CD8-positive, alpha-beta memory T cell (primary cell): ENCODE measurements at regions of chr11 and their contacts with region 1.

Region 1: GRCh38 chr11:116787786-116788486 is at the start of gene ZPR1:
- DNase-seq: peak; percentile 82 to 91 (median 85)
- H3K4me3 ChIP-seq: peak within 1 kb of the TSS; percentile 93
- H3K4me3 Mint-ChIP-seq: peak within 1 kb of the TSS; percentile 93 to 100 (median 97)
- H3K27ac ChIP-seq: peak within 1 kb of the TSS; percentile 96
- H3K27ac Mint-ChIP-seq: peak within 1 kb of the TSS; percentile 88 to 99 (median 98)
- H3K4me1 ChIP-seq: peaks cover 29% of the 10 kb centered on the region
- H3K4me1 Mint-ChIP-seq: peaks cover 46 to 69% (median 57%) of the 10 kb centered on the region in 3 donors
- H3K27me3 ChIP-seq: no peaks in the 10 kb centered on the region
- H3K27me3 Mint-ChIP-seq: no peaks in the 10 kb centered on the region
- total RNA-seq, gene ZPR1: 118 to 124 TPM

Region 2: GRCh38 chr11:116637766-116638165 is 150.2 kb before region 1 on chr11:
- CTCF ChIA-PET with region 1: no interaction called
- POLR2A ChIA-PET with region 1: no interaction called
- DNase-seq: no peak
- H3K4me3 ChIP-seq: no peak overlapping the region
- H3K4me3 Mint-ChIP-seq: no peak overlapping the region
- H3K27ac ChIP-seq: no peak overlapping the region
- H3K27ac Mint-ChIP-seq: no peak overlapping the region
- H3K4me1 ChIP-seq: no peaks in the 10 kb centered on the region
- H3K4me1 Mint-ChIP-seq: no peaks in the 10 kb centered on the region
- H3K27me3 ChIP-seq: no peaks in the 10 kb centered on the region
- H3K27me3 Mint-ChIP-seq: peaks cover 8 to 29% of the 10 kb centered on the region in 2 donors

Region 3: DNA sequence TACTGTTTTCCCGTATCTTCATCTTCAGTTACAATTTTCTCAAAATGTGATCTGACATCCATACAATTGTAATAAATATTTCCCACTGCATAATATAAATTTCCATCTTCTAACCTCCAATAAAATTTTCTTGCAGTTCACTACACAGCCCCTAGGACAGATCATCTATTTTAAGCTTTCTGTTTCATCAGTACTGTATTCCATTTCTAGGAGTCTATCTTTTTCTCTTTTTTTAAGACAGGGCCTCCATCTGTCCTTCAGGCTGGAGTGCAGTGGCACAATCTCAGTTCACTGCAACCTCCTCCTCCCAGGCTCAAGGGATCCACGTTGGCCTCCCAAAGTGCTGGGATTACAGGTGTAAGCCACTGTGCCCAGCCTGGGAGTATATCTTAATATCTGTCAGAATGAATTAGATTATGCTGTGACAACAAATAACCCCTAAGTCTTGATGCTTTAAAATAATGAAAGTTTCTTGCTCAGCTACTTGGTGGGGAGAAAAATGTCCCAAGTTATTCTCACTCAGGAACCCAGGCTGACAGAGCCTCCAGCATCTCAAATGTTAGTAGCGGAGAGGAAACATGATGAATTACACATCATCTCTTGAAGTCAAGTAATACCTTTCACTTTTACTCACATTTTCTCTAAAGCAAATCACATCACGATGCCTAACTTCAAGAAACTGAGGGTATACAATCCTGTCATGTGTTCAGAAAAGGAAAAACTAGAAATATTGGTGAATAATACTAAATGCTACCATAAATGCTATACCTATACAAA is 107.4 kb before region 1 on chr11:
- CTCF ChIA-PET with region 1: no interaction called
- POLR2A ChIA-PET with region 1: no interaction called
- DNase-seq: no peak
- H3K4me3 ChIP-seq: no peak overlapping the region
- H3K4me3 Mint-ChIP-seq: no peak overlapping the region
- H3K27ac ChIP-seq: no peak overlapping the region
- H3K27ac Mint-ChIP-seq: no peak overlapping the region
- H3K4me1 ChIP-seq: no peaks in the 10 kb centered on the region
- H3K4me1 Mint-ChIP-seq: no peaks in the 10 kb centered on the region
- H3K27me3 ChIP-seq: no peaks in the 10 kb centered on the region
- H3K27me3 Mint-ChIP-seq: peaks cover 5 to 22% of the 10 kb centered on the region in 2 donors

Region 4: GRCh38 chr11:116813781-116814471 is 26.0 kb after region 1 on chr11:
- CTCF ChIA-PET with region 1: interaction called, 10 read pairs
- POLR2A ChIA-PET with region 1: interaction called, 5 read pairs
- DNase-seq: no peak
- H3K4me3 ChIP-seq: no peak overlapping the region
- H3K4me3 Mint-ChIP-seq: no peak overlapping the region
- H3K27ac ChIP-seq: no peak overlapping the region
- H3K27ac Mint-ChIP-seq: peak overlapping the region in 1 of 8 donors; percentile 54
- H3K4me1 ChIP-seq: no peaks in the 10 kb centered on the region
- H3K4me1 Mint-ChIP-seq: no peaks in the 10 kb centered on the region
- H3K27me3 ChIP-seq: no peaks in the 10 kb centered on the region
- H3K27me3 Mint-ChIP-seq: peaks cover 1 to 3% of the 10 kb centered on the region in 2 donors

Region 5: DNA sequence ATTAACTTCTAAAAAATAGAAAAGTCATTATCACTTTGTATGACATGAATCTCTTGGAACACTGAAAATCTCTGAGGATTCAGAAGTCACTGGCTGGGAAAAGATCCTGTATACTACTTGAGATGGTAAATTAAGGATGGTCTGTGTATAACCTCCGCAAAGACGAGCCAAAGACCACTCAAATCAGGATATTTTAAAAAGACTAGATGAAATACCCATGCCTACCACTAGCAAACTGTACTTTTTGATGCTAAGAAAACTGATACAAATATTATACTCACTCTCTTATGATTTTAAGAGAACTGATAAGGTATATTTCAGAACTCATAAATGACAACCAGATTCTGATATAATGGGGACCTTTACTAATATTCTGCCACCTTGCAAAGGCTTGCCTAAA is 128.1 kb after region 1 on chr11:
- CTCF ChIA-PET with region 1: no interaction called
- POLR2A ChIA-PET with region 1: no interaction called
- DNase-seq: no peak
- H3K4me3 ChIP-seq: no peak overlapping the region
- H3K4me3 Mint-ChIP-seq: no peak overlapping the region
- H3K27ac ChIP-seq: no peak overlapping the region
- H3K27ac Mint-ChIP-seq: no peak overlapping the region
- H3K4me1 ChIP-seq: no peaks in the 10 kb centered on the region
- H3K4me1 Mint-ChIP-seq: peaks cover 16 to 56% (median 41%) of the 10 kb centered on the region in 3 donors
- H3K27me3 ChIP-seq: no peaks in the 10 kb centered on the region
- H3K27me3 Mint-ChIP-seq: no peaks in the 10 kb centered on the region

Region 6: DNA sequence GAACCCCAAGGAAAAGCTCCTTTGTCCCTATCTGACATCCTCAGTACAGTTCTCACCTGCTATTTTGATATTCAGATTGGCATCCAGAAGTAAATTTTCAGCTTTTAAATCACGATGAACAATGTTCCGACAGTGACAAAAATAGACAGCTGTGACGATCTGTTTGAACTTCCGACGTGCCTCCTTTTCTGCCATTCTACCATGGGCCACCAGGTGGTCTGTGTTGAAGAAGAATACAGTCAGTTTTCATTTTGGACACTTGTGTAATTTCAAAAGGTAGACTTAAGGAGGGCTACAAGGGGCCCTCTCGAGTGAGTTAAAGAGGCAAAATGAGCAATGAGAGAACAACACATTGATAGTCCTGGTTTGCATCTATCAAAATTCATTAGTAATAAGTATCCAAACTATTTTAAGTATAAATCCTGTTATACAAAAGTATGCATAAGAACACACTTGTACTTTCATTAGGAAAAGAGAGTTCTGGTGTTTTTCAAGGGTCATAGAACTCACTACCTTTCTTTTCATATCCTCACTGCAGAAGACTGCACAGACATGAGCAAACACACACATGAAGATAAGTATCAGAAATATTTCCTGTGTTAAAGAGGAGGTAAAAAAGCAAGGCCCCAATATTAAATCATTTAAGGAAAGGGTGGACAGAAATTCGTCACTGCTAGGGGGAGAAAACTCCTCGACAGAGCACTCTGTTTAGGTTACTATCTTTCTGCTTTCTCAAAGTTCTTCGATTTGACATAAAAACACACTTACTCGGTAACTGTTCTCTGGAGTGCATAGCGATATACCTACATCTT is 139.4 kb after region 1 on chr11:
- CTCF ChIA-PET with region 1: interaction called, 11 read pairs
- POLR2A ChIA-PET with region 1: no interaction called
- DNase-seq: peak; percentile 8 to 70 (median 50)
- H3K4me3 ChIP-seq: peak overlapping the region; percentile 1
- H3K4me3 Mint-ChIP-seq: peak overlapping the region; percentile 17 to 94 (median 81)
- H3K27ac ChIP-seq: peak overlapping the region; percentile 46
- H3K27ac Mint-ChIP-seq: peak overlapping the region; percentile 92 to 100 (median 98)
- H3K4me1 ChIP-seq: peaks cover 84% of the 10 kb centered on the region
- H3K4me1 Mint-ChIP-seq: peaks cover 89 to 93% (median 92%) of the 10 kb centered on the region in 3 donors
- H3K27me3 ChIP-seq: no peaks in the 10 kb centered on the region
- H3K27me3 Mint-ChIP-seq: no peaks in the 10 kb centered on the region

Region 7: DNA sequence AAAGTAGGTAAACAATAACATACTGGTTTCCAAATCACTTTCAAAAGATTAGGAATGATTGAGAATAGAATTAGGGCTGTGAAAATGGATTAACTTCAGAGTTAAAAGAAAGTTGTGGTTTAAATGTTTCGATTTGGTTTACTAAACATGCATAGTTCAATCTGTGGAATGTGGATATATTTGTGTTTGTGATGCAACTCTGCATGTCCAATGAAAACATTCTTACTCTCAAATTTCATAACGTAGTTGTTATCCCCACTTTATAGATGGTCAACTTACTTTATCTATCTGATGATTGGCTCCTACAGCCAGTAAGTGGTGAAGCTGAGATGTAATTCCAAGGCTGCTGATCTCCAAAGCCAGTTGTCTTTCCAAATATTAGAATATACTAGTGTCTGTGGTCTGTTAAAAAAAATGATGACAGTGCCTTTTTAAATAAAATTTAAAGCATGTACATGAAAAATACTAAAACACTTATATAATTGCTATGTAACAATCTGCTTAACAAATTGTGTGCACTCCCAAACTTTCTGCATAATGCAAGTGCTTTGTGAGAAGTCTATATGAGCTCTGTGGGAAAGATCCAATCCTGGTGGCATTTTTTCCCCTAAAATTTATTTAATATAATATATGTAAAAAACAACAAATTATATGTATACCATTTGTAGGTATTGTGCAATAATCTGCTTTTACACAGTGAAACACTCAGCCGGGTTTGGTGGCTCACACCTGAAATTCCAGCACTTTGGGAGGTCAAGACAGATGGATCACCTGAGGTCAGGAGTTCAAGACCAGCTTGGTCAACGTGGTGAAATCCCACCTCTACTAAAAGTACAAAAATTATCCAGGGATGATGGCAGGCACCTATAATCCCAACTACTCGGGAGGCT is 320.0 kb after region 1 on chr11:
- CTCF ChIA-PET with region 1: interaction called, 99 read pairs
- POLR2A ChIA-PET with region 1: interaction called, 8 read pairs
- DNase-seq: no peak
- H3K4me3 ChIP-seq: no peak overlapping the region
- H3K4me3 Mint-ChIP-seq: no peak overlapping the region
- H3K27ac ChIP-seq: no peak overlapping the region
- H3K27ac Mint-ChIP-seq: no peak overlapping the region
- H3K4me1 ChIP-seq: no peaks in the 10 kb centered on the region
- H3K4me1 Mint-ChIP-seq: peaks cover 3 to 5% (median 4%) of the 10 kb centered on the region in 3 donors
- H3K27me3 ChIP-seq: no peaks in the 10 kb centered on the region
- H3K27me3 Mint-ChIP-seq: peaks cover 0 to 4% of the 10 kb centered on the region in 2 donors